Mammary epithelial cell (primary cell): ENCODE measurements at regions of chr1 and their contacts with region 1.

Region 1: GRCh38 chr1:27556781-27557595 is 47.0 kb downstream of the AHDC1 start:
- DNase-seq: peak; percentile 94
- H3K4me3 ChIP-seq: no peak overlapping the region
- H3K27ac ChIP-seq: peak overlapping the region; percentile 56
- H3K4me1 ChIP-seq: peaks cover 48% of the 10 kb centered on the region
- H3K27me3 ChIP-seq: no peaks in the 10 kb centered on the region
- CTCF ChIP-seq: peak; percentile 67 to 89

Region 2: DNA sequence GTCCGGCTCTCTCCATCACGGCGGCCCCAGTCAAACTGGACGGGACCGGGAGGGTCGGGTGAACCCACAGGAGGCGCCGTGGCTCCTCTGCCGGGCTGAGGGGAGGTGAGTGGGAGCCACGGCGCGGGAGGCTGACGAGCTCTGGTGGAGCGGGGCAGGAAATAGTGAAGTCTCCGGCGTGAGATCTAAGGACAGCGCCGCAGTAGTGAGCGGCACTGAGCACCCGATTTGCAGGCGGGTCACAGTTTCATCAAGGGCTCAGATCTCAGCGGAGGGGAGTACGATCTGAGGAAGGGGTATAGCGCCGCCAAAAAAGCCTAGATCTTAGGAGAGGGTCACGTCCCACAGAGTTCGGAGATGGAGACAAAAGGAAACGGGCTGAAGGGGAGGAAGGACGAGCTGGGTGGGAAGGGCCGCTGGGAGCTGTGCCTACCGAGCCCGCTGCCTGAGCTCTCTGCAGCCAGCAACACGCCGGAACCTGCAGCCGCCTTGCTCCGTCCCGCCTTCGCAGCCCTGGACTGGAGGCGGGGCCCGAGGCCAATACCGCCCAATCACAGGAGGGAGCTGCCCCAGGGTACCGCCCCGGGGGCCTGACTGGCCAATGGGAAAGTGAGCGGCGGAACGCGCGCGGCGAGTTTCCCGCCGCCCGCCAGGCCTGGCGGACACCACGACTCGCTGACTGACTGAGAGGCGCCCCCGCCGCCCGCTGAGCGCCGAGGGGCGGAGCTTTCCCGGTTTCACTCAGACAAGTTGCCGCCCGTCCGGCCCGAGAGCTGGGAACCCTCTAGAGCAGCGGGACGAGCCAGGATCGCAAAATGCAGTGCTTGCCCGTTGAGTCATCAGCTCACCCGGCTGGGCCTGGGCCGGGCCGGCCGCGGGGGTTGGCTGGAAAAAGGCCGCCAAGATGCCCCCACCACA is 692.1 kb before region 1 on chr1:
- CTCF ChIA-PET with region 1: no interaction called
- dilution Hi-C with region 1: no loop called
- in situ Hi-C with region 1: no loop called
- intact Hi-C with region 1: no loop called
- DNase-seq: peak; percentile 98
- H3K4me3 ChIP-seq: peak overlapping the region; percentile 53 to 99 (median 82)
- H3K27ac ChIP-seq: peak overlapping the region; percentile 98
- H3K4me1 ChIP-seq: peaks cover 36% of the 10 kb centered on the region
- H3K27me3 ChIP-seq: no peaks in the 10 kb centered on the region
- CTCF ChIP-seq: peak in 1 of 2 donors; percentile 1

Region 3: DNA sequence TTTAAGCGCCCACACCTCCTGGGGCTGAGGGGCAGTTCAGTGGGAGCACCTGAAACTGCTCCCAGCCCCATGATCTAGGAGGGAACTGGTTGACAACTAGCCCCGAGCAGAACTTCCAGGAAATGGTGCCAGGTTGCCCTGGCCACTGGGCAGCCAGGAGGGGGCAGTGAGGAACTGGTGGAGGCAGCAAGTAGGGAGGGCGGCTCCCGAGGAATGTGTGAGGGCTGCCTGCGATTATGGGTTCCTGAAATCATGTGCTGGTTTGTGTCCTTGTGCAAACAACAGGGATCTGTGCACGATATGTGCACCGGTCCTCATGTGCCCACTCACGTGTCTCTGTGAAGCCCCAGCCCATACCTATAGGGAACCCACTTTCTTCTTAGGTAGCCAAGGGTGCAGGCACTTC is 154.6 kb before region 1 on chr1:
- CTCF ChIA-PET with region 1: interaction called, 3 read pairs
- dilution Hi-C with region 1: no loop called
- in situ Hi-C with region 1: no loop called
- intact Hi-C with region 1: loop called (anchors 5 kb)
- DNase-seq: peak; percentile 54
- H3K4me3 ChIP-seq: no peak overlapping the region
- H3K27ac ChIP-seq: no peak overlapping the region
- H3K4me1 ChIP-seq: peaks cover 30% of the 10 kb centered on the region
- H3K27me3 ChIP-seq: no peaks in the 10 kb centered on the region
- CTCF ChIP-seq: peak; percentile 65 to 76

Region 4: GRCh38 chr1:27489910-27490741 is 66.9 kb before region 1 on chr1 and contains the start of gene WASF2:
- CTCF ChIA-PET with region 1: no interaction called
- dilution Hi-C with region 1: no loop called
- in situ Hi-C with region 1: no loop called
- intact Hi-C with region 1: loop called (anchors 5 kb)
- DNase-seq: peak; percentile 95
- H3K4me3 ChIP-seq: peak within 1 kb of the TSS; percentile 63 to 94 (median 94)
- H3K27ac ChIP-seq: peak within 1 kb of the TSS; percentile 97
- H3K4me1 ChIP-seq: peaks cover 18% of the 10 kb centered on the region
- H3K27me3 ChIP-seq: no peaks in the 10 kb centered on the region
- CTCF ChIP-seq: no peak
- total RNA-seq, gene WASF2: 32.2 to 138 TPM

Region 5: DNA sequence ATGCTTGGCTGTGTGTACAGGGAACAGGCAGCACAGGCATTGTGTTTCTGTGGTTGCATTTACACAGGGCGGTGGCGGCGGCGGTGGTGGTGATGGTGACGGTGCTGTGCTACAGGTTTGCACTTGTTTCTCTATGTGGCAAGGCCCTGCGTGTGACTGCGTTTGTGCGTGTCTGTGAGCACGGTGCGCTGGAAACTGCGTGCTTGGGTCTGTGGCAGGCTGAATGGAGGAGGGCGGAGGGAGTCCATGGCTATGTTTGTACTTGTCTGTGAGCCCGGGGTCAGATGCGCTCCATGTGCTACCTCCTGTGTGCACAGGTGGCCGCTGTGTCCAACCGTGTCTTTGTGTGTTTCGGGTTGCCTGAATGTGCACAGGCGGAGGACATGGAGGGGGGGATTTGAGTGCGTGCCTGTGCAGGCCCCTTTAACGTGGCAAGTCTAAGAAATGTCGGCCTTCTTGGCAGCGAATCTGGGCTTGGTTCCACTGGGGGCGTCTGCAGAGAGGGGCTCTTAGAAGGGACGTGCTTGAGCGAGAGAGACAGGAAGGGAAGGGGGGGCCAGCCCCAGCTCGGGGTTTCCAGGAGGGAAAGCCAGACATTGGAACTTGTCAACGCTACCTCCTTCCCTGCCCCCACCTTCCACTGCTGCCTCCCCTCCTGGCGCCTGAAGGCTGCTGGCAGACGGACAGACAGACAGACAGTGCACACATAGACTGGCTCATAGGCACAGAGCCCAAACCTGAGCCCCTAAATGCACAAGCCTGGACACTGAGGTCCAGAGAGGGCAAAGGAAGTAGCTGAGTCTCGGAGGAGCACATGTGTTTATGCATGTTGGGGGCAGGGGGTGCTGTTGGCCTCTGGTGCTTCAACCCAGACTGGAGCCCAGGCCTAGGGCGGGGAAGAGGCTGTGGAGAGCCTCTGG is 34.3 kb before region 1 on chr1:
- CTCF ChIA-PET with region 1: no interaction called
- dilution Hi-C with region 1: no loop called
- in situ Hi-C with region 1: no loop called
- intact Hi-C with region 1: loop called (anchors 2 kb)
- DNase-seq: peak; percentile 99
- H3K4me3 ChIP-seq: peak overlapping the region in 1 of 3 experiments; percentile 7
- H3K27ac ChIP-seq: peak overlapping the region; percentile 83
- H3K4me1 ChIP-seq: peaks cover 91% of the 10 kb centered on the region
- H3K27me3 ChIP-seq: no peaks in the 10 kb centered on the region
- CTCF ChIP-seq: peak; percentile 29 to 42

Region 6: DNA sequence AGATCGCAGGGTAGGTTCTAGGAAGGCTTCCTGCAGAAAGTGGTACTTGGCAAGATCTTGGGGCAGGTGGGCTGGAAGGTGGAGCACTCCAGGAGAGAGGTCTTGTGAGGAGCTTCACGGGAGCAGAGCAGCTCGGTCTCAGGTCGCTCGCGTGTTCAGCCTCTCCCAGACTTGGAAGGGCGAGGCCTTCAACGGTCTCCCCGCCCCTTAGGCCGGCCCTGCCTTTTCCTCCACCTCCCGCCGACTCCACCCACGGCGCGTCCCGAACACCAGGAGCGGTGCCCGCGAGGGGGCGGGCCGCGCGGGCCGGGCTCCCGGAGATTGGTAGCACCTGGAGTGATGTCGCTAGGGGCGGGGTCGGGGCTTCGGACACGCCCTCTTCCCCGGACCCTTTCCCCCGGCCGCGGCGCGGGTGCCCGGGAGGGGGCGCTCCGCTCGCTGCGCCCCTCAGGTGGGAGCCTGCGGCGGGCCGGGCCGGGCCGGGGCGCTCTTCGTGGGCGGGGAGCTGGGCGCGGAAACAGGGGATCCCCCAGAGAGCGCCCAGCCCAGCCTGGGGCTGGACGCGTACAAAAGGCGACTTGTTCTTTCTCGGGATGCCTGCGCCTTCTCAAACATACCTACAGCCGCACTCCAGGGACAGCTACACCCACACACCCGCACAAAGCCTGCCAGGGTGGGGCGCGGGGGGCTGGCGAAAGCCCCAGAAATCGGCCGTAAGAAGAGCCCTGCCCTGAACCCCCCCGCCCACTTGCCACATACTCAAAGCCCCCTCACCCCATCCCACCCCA is 11.5 kb after region 1 on chr1:
- CTCF ChIA-PET with region 1: interaction called, 16 read pairs
- dilution Hi-C with region 1: no loop called
- in situ Hi-C with region 1: no loop called
- intact Hi-C with region 1: loop called (anchors 1 kb)
- DNase-seq: peak; percentile 97
- H3K4me3 ChIP-seq: peak overlapping the region in 1 of 3 experiments; percentile 30
- H3K27ac ChIP-seq: peak overlapping the region; percentile 71
- H3K4me1 ChIP-seq: peaks cover 79% of the 10 kb centered on the region
- H3K27me3 ChIP-seq: no peaks in the 10 kb centered on the region
- CTCF ChIP-seq: peak; percentile 15 to 56

Region 7: GRCh38 chr1:27603681-27604578 is 46.9 kb after region 1 on chr1 and contains the start of gene AHDC1:
- CTCF ChIA-PET with region 1: interaction called, 15 read pairs
- dilution Hi-C with region 1: no loop called
- in situ Hi-C with region 1: loop called (anchors 5 to 10 kb)
- intact Hi-C with region 1: loop called (anchors 1 kb)
- DNase-seq: peak; percentile 89
- H3K4me3 ChIP-seq: peak within 1 kb of the TSS; percentile 77 to 93 (median 78)
- H3K27ac ChIP-seq: peak within 1 kb of the TSS; percentile 33
- H3K4me1 ChIP-seq: peaks cover 44% of the 10 kb centered on the region
- H3K27me3 ChIP-seq: no peaks in the 10 kb centered on the region
- CTCF ChIP-seq: peak in 1 of 2 donors; percentile 14
- total RNA-seq, gene AHDC1: 35.3 to 51.8 TPM

Region 8: DNA sequence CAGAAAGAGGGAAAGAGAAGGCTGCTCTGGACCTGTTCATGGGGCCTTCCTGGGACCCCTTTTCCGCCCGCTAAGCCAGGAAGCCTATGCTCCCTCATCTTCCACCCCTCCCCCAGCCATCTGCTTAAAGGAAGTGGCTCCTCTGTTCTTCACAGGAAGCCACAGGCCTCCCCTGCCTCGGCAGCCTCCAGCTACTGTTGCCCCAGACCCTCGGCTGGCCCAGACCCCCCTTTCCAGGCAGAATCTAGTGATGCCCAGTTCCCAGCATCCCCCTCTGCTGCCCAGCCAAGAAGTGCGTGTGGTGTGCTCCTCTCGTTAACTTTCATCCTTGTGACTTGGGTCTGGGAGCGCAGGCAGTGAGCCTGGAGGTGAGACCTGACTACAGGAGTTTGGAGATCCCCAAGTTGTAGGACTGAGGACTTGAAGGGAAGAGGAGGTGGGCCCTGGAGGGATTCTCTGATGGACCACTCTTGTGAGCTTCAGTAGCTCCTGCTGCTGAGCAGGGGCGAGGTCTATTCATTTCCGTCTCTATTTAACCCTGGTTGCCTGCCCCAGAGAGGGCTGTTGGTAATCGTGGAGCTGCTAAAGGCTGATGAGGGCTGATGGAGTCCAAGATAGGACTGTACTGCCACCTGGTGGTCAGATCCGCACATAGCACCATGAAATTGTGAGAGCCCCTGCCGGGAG is 105.9 kb after region 1 on chr1:
- CTCF ChIA-PET with region 1: no interaction called
- dilution Hi-C with region 1: no loop called
- in situ Hi-C with region 1: no loop called
- intact Hi-C with region 1: loop called (anchors 1 kb)
- DNase-seq: peak; percentile 62
- H3K4me3 ChIP-seq: no peak overlapping the region
- H3K27ac ChIP-seq: no peak overlapping the region
- H3K4me1 ChIP-seq: peaks cover 14% of the 10 kb centered on the region
- H3K27me3 ChIP-seq: no peaks in the 10 kb centered on the region
- CTCF ChIP-seq: peak; percentile 81

Region 9: DNA sequence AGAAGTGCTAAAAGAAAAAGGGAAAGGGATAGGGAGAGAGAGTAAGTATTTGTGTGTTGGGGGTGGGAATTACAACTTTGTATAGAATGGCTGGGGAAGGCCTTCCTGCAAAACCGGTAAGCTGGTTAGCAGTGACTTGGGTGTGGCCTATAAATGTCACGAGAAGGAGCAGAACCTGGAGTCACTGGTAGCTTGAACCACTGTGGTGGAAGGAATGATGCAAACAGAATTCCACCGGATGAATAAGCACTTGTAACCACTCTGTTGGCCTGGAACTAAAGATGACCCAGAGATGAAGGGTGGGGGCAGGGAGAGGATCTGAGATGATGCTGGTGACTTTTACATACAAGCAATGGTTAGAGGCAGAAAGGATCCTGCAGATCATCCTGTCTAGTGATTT is 411.7 kb after region 1 on chr1:
- CTCF ChIA-PET with region 1: no interaction called
- dilution Hi-C with region 1: no loop called
- in situ Hi-C with region 1: no loop called
- intact Hi-C with region 1: no loop called
- DNase-seq: peak; percentile 90
- H3K4me3 ChIP-seq: no peak overlapping the region
- H3K27ac ChIP-seq: peak overlapping the region; percentile 18
- H3K4me1 ChIP-seq: peaks cover 26% of the 10 kb centered on the region
- H3K27me3 ChIP-seq: no peaks in the 10 kb centered on the region
- CTCF ChIP-seq: no peak